HepG2 (cell line): ENCODE measurements at regions of chr4 and their contacts with region 1.

Region 1: DNA sequence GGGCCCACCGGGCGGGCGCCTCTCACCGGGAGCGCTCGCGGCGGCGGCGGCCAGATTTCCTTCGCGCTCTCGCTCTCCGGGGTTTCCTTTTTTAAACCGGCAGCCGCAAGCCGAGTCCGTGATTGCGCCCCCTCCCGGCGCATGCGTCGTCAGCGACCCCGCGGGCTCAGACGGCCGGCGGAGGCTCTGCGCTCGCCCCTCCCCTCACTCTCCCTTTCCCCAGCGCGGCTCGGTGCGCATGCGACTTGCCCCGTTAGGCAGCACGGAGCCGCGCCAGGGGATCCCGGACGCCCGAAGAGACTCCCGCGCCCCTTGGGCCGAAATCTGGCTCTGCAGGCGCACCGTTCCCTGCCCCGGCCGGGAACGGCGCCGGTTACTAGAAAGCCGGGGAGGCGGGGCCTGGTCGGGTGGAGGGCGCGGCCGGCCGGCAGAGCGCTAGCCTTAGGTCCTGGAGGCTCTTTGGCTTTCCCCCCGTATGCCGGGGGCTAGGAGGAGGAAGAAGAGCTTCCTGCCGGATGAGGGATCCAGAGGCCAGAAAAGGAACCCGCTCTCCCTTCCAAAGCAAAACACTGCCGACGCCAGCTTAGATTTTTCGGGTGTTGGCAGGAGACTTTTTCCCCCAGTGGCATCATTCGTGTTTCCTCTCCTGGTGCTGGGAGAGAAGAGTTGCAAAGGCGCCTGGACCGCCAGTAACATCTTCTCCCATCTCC is at the start of gene CLOCK:
- DNase-seq: peak; percentile 74
- ATAC-seq: peak; percentile 90
- H3K4me3 ChIP-seq: peak within 1 kb of the TSS; percentile 78 to 91 (median 89)
- H3K27ac ChIP-seq: peak within 1 kb of the TSS; percentile 98
- H3K4me1 ChIP-seq: peaks cover 38% of the 10 kb centered on the region
- H3K27me3 ChIP-seq: no peaks in the 10 kb centered on the region; a peak in 2 of 5 replicates
- CTCF ChIP-seq: peak; percentile 74
- EP300 ChIP-seq: no peak
- POLR2A ChIP-seq: peak; percentile 50 to 53; a peak in 3 of 4 replicates
- RAD21 ChIP-seq: peak; percentile 61; the same call in 1 of the 2 replicates
- total RNA-seq, gene CLOCK: 13.5 and 17.6 TPM in 2 replicates

Region 2: DNA sequence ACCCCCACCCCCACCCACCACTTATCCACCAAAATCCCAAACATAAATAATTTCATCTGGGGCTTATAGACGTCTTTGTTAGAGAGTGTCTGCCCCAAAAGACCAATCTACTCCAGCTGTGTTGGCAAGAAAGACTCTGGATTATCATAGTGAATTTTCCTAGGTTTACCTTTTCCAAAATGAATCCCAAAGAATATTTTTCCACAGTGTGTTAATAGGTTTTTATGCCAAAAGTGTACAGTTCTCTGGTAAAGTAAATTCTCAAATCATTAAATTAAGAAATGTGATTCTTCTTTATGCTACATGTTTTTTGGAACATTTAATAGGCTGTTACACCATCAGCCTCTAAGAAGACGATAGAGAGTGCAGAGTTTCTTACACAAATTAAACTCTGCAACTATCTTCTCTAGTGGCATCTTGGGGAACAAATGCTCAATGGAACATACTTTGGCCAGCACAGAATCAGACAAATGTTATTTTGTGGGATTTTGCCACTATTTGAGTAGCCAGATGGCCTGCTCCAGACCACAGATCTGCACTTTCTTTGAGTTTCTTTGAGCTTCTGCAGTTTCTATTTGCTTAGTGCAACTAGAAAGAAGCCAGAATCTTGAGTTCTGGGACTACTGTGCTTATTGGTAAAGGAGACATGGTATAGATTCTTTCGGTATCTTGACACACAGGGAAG is 683.2 kb before region 1 on chr4:
- CTCF ChIA-PET with region 1: no interaction called
- POLR2A ChIA-PET with region 1: no interaction called
- in situ Hi-C with region 1: no loop called
- intact Hi-C with region 1: no loop called
- DNase-seq: no peak
- ATAC-seq: no peak
- H3K4me3 ChIP-seq: no peak overlapping the region
- H3K27ac ChIP-seq: no peak overlapping the region
- H3K4me1 ChIP-seq: no peaks in the 10 kb centered on the region
- H3K27me3 ChIP-seq: no peaks in the 10 kb centered on the region
- CTCF ChIP-seq: no peak
- EP300 ChIP-seq: no peak
- POLR2A ChIP-seq: no peak
- RAD21 ChIP-seq: no peak

Region 3: DNA sequence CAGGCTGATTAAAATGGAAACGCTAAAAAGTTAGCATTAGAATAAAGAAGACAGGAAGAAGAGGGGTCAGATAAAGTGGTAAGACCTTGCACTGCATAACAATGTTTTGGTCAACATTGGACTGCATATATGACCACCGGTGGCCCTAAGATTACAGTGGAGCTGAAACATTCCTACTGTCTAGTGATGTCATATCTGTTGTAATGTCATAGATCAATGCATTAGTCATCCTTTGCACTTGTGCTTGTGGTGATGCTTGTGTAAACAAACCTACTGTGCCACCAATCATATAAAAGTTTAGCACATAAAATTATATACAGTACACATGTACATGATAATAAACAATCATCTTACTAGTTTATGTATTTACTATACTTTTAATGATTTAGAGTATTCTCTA is 78.2 kb before region 1 on chr4:
- CTCF ChIA-PET with region 1: no interaction called
- POLR2A ChIA-PET with region 1: no interaction called
- in situ Hi-C with region 1: no loop called
- intact Hi-C with region 1: loop called (anchors 5 kb)
- DNase-seq: peak; percentile 49
- ATAC-seq: no peak; the same call in 2 of the 3 replicates
- H3K4me3 ChIP-seq: no peak overlapping the region
- H3K27ac ChIP-seq: no peak overlapping the region
- H3K4me1 ChIP-seq: no peaks in the 10 kb centered on the region
- H3K27me3 ChIP-seq: no peaks in the 10 kb centered on the region
- CTCF ChIP-seq: no peak
- EP300 ChIP-seq: no peak
- POLR2A ChIP-seq: no peak
- RAD21 ChIP-seq: no peak

Region 4: GRCh38 chr4:55853484-55854046 is 306.7 kb after region 1 on chr4 and contains the start of gene EXOC1:
- CTCF ChIA-PET with region 1: no interaction called
- POLR2A ChIA-PET with region 1: interaction called, 3 read pairs
- in situ Hi-C with region 1: no loop called
- intact Hi-C with region 1: loop called (anchors 5 kb)
- DNase-seq: peak; percentile 95
- ATAC-seq: peak; percentile 95
- H3K4me3 ChIP-seq: peak within 1 kb of the TSS; percentile 95 to 99 (median 97)
- H3K27ac ChIP-seq: peak within 1 kb of the TSS; percentile 62
- H3K4me1 ChIP-seq: peaks cover 57% of the 10 kb centered on the region
- H3K27me3 ChIP-seq: 0 out of 5 replicates have a peak, but pooled peaks cover 0 to 2% of the 10 kb centered on the region in 2 experiments
- CTCF ChIP-seq: no peak
- EP300 ChIP-seq: no peak
- POLR2A ChIP-seq: peak; percentile 63 to 69; a peak in 3 of 4 replicates
- RAD21 ChIP-seq: peak; percentile 28; the same call in 1 of the 2 replicates
- total RNA-seq, gene EXOC1: 18.4 and 23.8 TPM in 2 replicates

Region 5: DNA sequence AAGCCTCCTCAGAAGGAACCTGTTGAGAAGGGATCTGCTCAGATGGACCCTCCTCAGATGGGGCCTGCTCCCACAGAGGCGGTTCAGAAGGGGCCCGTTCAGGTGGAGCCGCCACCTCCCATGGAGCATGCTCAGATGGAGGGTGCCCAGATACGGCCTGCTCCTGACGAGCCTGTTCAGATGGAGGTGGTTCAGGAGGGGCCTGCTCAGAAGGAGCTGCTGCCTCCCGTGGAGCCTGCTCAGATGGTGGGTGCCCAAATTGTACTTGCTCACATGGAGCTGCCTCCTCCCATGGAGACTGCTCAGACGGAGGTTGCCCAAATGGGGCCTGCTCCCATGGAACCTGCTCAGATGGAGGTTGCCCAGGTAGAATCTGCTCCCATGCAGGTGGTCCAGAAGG is 1383.7 kb after region 1 on chr4:
- CTCF ChIA-PET with region 1: no interaction called
- POLR2A ChIA-PET with region 1: no interaction called
- in situ Hi-C with region 1: no loop called
- intact Hi-C with region 1: no loop called
- DNase-seq: no peak
- ATAC-seq: peak; percentile 29; the same call in 2 of the 3 replicates
- H3K4me3 ChIP-seq: no peak overlapping the region
- H3K27ac ChIP-seq: no peak overlapping the region
- H3K4me1 ChIP-seq: no peaks in the 10 kb centered on the region
- H3K27me3 ChIP-seq: no peaks in the 10 kb centered on the region
- CTCF ChIP-seq: no peak
- EP300 ChIP-seq: no peak
- POLR2A ChIP-seq: no peak
- RAD21 ChIP-seq: no peak